ENCODE measurements at regions of chr4 and their contacts with region 1.

Region 1: GRCh38 chr4:133154725-133155124 is 5.6 kb downstream of the PCDH10 start:
- DNase-seq: peak in 1 of 4 experiments; percentile 36
- ATAC-seq: no peak
- H3K4me3 ChIP-seq: no peak overlapping the region
- H3K27ac ChIP-seq: no peak overlapping the region
- H3K4me1 ChIP-seq: peaks cover 0 to 21% of the 10 kb centered on the region in 2 experiments; a peak in 2 of 5 replicates
- H3K27me3 ChIP-seq: no peaks in the 10 kb centered on the region
- CTCF ChIP-seq: peak in 2 of 3 experiments; percentile 38 to 39; a peak in 3 of 6 replicates
- EP300 ChIP-seq: no peak
- POLR2A ChIP-seq: no peak
- RAD21 ChIP-seq: peak; percentile 45 to 62

Region 2: DNA sequence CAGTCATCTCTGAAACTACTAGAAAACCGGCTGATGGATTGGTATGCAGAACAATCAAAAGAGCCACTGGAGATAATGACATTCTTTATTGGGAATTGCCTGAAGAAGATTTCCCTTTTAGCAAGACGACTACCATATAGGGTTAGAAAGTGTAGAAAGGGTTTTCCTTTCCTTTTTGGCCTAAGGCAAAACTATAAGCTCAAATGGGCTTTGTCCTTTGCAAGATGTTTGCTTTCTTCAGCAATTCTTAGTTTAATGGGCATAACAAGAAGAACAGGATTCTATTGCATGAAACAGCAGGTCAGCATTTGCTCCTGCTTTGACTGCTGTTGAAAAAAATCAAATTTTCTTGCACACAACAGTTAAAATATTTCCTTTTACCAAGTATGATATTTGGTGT is 219.8 kb before region 1 on chr4:
- CTCF ChIA-PET with region 1: no interaction called
- POLR2A ChIA-PET with region 1: no interaction called
- in situ Hi-C with region 1: no loop called
- intact Hi-C with region 1: no loop called
- DNase-seq: no peak
- ATAC-seq: no peak
- H3K4me3 ChIP-seq: no peak overlapping the region
- H3K27ac ChIP-seq: no peak overlapping the region
- H3K4me1 ChIP-seq: no peaks in the 10 kb centered on the region
- H3K27me3 ChIP-seq: no peaks in the 10 kb centered on the region
- CTCF ChIP-seq: no peak
- EP300 ChIP-seq: no peak
- POLR2A ChIP-seq: no peak
- RAD21 ChIP-seq: no peak

Region 3: GRCh38 chr4:133316909-133317308 is 162.2 kb after region 1 on chr4:
- CTCF ChIA-PET with region 1: no interaction called
- POLR2A ChIA-PET with region 1: no interaction called
- in situ Hi-C with region 1: no loop called
- intact Hi-C with region 1: loop called (anchors 10 kb)
- DNase-seq: peak in 1 of 4 experiments; percentile 21
- ATAC-seq: no peak
- H3K4me3 ChIP-seq: no peak overlapping the region
- H3K27ac ChIP-seq: no peak overlapping the region
- H3K4me1 ChIP-seq: no peaks in the 10 kb centered on the region
- H3K27me3 ChIP-seq: no peaks in the 10 kb centered on the region
- CTCF ChIP-seq: no peak
- EP300 ChIP-seq: no peak
- POLR2A ChIP-seq: no peak
- RAD21 ChIP-seq: no peak